Cardiac septum (tissue), 1 donor: ENCODE measurements at regions of chr6 and their contacts with region 1.

Region 1: DNA sequence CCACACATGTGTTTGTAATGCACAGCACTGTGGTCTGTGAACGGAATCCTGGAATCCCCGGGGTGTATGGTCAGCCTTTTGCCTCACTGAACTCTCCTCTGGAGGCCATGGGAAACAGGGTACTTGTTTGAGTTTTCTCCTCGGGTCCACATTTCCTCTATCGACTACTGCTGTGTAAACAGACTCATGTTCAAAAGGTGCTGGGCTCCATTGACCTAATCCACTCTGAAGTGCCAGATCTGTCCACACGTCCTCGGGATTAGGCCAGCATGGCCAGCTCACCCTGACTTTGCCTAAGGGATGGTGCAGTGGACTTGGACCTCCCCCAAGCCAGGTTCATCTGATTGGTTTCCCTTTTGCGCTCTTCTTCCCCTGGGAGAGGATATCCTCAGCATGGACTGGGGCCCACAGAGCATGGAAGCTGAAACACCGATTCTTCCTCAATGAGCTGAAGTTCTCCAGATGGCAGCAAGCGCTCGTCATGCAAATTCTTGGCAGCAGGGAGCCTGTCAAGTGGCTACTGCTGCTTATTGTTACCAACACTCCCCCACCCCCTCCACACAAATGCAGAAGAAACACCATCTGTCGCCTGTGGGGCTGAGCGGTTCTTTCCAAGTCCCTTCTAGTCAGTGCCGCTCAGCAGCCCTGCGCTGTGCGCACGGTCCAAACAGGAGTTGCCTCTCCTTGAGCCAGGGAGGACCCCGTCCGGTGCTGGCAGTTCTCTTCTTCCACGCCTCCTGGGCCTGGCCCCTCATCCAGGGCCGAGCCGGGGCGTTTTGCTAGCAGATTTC is 292.6 kb upstream of the MARCKS start:
- DNase-seq: peak; percentile 90

Region 2: GRCh38 chr6:113642714-113643406 is 78.3 kb after region 1 on chr6:
- intact Hi-C with region 1: no loop called
- DNase-seq: no peak

Region 3: GRCh38 chr6:113654396-113654795 is 89.8 kb after region 1 on chr6:
- intact Hi-C with region 1: loop called (anchors 10 kb)
- DNase-seq: peak; percentile 79